Activated naive CD4-positive, alpha-beta T cell treated with anti-CD3 and anti-CD28 coated beads, Interleukin-2, amount 10 ng/mL, durations not matched to agents 7 days and 5 days (primary cell): ENCODE measurements at regions of chr3 and their contacts with region 1.

Region 1: DNA sequence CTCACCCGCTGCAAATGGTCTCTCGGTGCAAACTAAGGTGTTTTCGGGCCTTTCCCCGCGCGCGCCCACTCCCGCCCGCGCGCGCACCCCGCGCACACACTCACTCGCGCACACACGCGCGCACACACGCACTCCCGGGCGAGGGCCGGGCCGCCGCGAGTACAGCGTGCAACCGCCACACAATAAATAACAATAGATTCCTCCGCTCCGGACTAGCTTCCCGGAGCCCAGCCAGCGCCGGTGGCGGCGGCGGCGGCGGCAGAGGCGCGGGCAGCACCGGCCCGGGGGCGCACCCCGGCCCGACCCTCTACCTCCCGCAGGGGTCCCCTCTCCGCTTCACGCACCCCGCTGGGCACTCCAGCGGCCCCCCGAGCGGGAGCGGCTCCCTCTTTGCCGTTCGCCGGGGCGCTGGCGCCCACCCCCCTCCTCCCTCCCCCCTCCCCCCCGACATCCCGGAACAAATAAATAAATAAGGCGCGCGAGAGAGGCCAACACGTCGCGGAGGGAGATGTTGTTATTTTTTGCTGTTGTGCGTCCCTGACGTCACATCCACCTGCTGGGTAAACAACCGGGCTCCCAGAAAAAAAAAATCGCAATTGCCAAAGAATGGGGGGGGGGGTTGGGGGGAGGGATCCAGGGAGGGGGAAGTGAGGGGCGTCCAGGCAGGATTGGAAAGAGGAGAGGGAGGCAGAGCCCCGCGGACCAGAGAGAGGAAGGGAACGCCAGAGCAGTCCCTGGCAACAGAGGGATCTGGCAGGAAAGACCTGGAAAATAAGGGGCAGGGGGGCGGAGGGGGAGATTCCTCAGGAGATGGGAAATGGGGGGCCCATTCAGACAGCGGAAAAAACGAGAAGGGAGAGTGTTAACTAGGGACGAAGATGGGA is at the start of gene FOXP1:
- DNase-seq: peak; percentile 66
- H3K4me3 Mint-ChIP-seq: peak within 1 kb of the TSS; percentile 93
- H3K27ac Mint-ChIP-seq: peak within 1 kb of the TSS; percentile 95
- H3K4me1 Mint-ChIP-seq: peaks cover 42% of the 10 kb centered on the region
- H3K27me3 Mint-ChIP-seq: peaks cover 50% of the 10 kb centered on the region

Region 2: DNA sequence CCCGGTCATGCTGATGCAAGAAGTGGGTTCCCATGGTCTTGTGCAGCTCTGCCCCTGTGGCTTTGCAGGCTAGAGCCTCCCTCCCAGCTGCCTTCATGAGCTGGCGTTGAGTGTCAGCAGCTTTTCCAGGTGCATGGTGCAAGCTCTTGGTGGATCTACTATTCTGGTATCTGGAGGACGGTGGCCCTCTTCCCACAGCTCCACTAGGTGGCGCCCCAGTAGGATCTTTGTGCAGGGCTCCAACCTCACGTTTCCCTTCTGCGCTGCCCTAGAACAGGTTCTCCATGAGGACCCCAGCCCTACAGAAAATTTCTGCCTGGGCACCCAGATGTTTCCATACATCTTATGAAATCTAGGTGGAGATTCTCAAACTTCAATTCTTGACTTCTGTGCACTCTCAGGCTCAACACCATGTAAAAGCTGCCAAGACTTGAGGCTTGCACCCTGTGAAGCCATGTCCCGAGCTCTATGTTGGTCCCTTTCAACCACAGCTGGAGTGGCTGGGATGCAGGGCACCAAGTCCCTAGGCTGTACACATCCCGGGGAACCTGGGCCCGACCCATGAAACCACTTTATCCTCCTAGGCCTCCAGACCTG is 1033.0 kb before region 1 on chr3:
- CTCF ChIA-PET with region 1: interaction called, 11 read pairs
- DNase-seq: peak; percentile 79
- H3K4me3 Mint-ChIP-seq: no peak overlapping the region
- H3K27ac Mint-ChIP-seq: no peak overlapping the region
- H3K4me1 Mint-ChIP-seq: no peaks in the 10 kb centered on the region
- H3K27me3 Mint-ChIP-seq: peaks cover 13% of the 10 kb centered on the region

Region 3: GRCh38 chr3:71172951-71173350 is 410.9 kb before region 1 on chr3:
- CTCF ChIA-PET with region 1: no interaction called
- DNase-seq: no peak
- H3K4me3 Mint-ChIP-seq: no peak overlapping the region
- H3K27ac Mint-ChIP-seq: no peak overlapping the region
- H3K4me1 Mint-ChIP-seq: no peaks in the 10 kb centered on the region
- H3K27me3 Mint-ChIP-seq: no peaks in the 10 kb centered on the region

Region 4: GRCh38 chr3:71655061-71655460 is 71.3 kb after region 1 on chr3:
- CTCF ChIA-PET with region 1: no interaction called
- DNase-seq: no peak
- H3K4me3 Mint-ChIP-seq: no peak overlapping the region
- H3K27ac Mint-ChIP-seq: no peak overlapping the region
- H3K4me1 Mint-ChIP-seq: peaks cover 2% of the 10 kb centered on the region
- H3K27me3 Mint-ChIP-seq: no peaks in the 10 kb centered on the region

Region 5: DNA sequence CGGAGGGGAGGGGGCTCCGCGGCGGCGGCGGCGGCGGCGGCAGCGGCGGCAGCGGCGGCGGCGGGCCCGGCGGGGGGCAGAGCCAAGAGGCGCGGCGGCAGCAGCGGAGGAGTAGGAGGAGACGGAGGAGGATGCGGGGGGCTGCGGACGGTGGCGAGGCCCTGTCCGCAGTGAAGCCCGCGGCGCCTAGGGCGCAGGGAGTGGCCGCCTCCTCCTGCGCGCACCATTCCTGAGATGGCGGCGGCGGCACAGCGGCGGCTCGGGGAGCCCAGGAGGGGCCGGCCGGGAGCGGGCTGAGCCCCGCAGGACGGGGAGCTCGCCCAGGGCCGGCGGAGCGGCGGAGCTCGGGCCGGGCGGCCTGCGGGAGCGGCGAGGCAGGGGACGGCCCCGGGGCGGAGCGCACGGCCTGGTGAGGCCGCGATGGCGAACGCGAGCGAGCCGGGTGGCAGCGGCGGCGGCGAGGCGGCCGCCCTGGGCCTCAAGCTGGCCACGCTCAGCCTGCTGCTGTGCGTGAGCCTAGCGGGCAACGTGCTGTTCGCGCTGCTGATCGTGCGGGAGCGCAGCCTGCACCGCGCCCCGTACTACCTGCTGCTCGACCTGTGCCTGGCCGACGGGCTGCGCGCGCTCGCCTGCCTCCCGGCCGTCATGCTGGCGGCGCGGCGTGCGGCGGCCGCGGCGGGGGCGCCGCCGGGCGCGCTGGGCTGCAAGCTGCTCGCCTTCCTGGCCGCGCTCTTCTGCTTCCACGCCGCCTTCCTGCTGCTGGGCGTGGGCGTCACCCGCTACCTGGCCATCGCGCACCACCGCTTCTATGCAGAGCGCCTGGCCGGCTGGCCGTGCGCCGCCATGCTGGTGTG is 170.0 kb after region 1 on chr3 and contains the start of gene GPR27:
- CTCF ChIA-PET with region 1: no interaction called
- DNase-seq: peak; percentile 37
- H3K4me3 Mint-ChIP-seq: peak within 1 kb of the TSS; percentile 64
- H3K27ac Mint-ChIP-seq: no peak within 1 kb of the TSS
- H3K4me1 Mint-ChIP-seq: peaks cover 6% of the 10 kb centered on the region
- H3K27me3 Mint-ChIP-seq: peaks cover 70% of the 10 kb centered on the region